Left colon (tissue), 2 donors: ENCODE measurements at regions of chr17 and their contacts with region 1.

Region 1: GRCh38 chr17:19362277-19363113 is at the start of gene B9D1:
- DNase-seq: peak; percentile 90 to 95
- ATAC-seq: peak; percentile 94
- total RNA-seq, gene B9D1: 7.1 to 7.3 TPM

Region 2: GRCh38 chr17:19418251-19418992 is 55.9 kb after region 1 on chr17:
- intact Hi-C with region 1: loop called in 1 of 2 experiments (anchors 10 kb)
- DNase-seq: no peak
- ATAC-seq: no peak

Region 3: DNA sequence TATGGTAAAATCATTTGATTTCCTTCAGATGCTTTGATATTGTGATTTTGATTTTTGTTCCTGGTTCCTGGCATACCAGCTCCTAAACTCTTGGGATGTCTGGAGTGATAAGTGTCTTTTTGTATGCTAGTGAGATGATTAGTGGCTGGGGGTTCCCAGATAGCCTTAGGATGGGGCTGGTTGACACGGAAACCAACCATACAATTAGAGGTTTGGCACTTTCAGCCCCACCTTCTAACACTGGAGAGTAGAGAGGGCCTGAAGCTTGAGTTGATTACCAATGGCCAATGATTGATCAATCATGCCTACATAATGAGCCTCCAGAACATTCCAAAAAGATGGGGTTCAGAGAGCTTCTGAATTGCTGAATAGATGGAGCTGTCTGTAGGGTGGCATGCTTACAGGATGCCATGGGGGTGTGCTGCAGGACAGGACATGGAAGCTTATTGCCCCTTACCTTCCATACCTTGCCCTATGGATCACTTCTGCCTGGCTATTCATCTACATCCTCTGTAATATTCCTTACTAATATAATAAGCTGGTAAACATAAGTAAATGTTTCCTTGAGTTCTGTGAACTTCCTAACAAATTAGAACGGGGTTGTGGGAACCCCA is 71.3 kb after region 1 on chr17:
- intact Hi-C with region 1: no loop called
- DNase-seq: no peak
- ATAC-seq: no peak

Region 4: DNA sequence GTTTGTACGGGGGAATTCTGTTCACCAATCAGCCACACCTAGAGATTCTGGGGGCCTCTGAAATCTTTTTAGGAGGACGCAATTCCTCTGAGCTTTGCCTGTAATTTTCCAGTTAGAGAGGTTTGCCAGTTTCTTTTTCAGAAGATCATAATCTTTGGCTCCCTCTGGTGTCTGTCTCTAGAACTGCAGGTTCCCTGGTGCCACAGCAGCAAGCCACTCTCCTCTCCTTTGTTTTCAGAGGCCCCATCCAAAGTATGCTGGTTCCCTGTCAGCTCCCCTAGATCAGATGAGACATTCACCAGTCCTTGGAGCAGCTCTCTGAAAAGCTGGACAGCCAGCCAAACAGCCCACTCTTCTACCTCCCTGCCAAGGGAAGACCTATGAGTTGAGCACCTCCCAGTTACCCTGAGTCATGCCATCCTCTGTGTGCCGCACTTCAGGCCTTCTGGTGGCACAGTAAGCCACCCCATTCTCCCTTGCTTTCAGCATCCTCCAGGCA is 84.6 kb after region 1 on chr17:
- intact Hi-C with region 1: loop called in 1 of 2 experiments (anchors 2 kb)
- DNase-seq: peak; percentile 57 to 67
- ATAC-seq: peak; percentile 78